ENCODE measurements at regions of chr10 and their contacts with region 1.

Region 1: GRCh38 chr10:28991326-28992270 is 297.3 kb upstream of the LYZL1 start:
- DNase-seq: peak; percentile 80
- ATAC-seq: peak; percentile 93
- H3K4me3 ChIP-seq: no peak overlapping the region
- H3K27ac ChIP-seq: peak overlapping the region; percentile 68
- H3K4me1 ChIP-seq: peaks cover 21% of the 10 kb centered on the region
- H3K27me3 ChIP-seq: no peaks in the 10 kb centered on the region
- CTCF ChIP-seq: peak; percentile 91

Region 2: GRCh38 chr10:29105531-29106215 is 114.1 kb after region 1 on chr10:
- CTCF ChIA-PET with region 1: no interaction called
- POLR2A ChIA-PET with region 1: no interaction called
- intact Hi-C with region 1: loop called (anchors 5 kb)
- DNase-seq: peak; percentile 84
- ATAC-seq: peak; percentile 71
- H3K4me3 ChIP-seq: peak overlapping the region; percentile 30; the same call in 1 of the 2 replicates
- H3K27ac ChIP-seq: peak overlapping the region; percentile 92
- H3K4me1 ChIP-seq: peaks cover 55% of the 10 kb centered on the region
- H3K27me3 ChIP-seq: no peaks in the 10 kb centered on the region
- CTCF ChIP-seq: no peak

Region 3: GRCh38 chr10:29131952-29132820 is 140.6 kb after region 1 on chr10:
- CTCF ChIA-PET with region 1: interaction called, 5 read pairs
- POLR2A ChIA-PET with region 1: no interaction called
- intact Hi-C with region 1: loop called (anchors 1 kb)
- DNase-seq: peak; percentile 56
- ATAC-seq: peak; percentile 85
- H3K4me3 ChIP-seq: no peak overlapping the region
- H3K27ac ChIP-seq: peak overlapping the region; percentile 46
- H3K4me1 ChIP-seq: peaks cover 12% of the 10 kb centered on the region
- H3K27me3 ChIP-seq: no peaks in the 10 kb centered on the region
- CTCF ChIP-seq: no peak

Region 4: GRCh38 chr10:29257106-29257783 is 265.6 kb after region 1 on chr10:
- CTCF ChIA-PET with region 1: no interaction called
- POLR2A ChIA-PET with region 1: no interaction called
- intact Hi-C with region 1: no loop called
- DNase-seq: peak; percentile 82
- ATAC-seq: peak; percentile 91
- H3K4me3 ChIP-seq: no peak overlapping the region
- H3K27ac ChIP-seq: peak overlapping the region; percentile 61
- H3K4me1 ChIP-seq: peaks cover 22% of the 10 kb centered on the region
- H3K27me3 ChIP-seq: 0 out of 2 replicates have a peak, but pooled peaks cover 8% of the 10 kb centered on the region
- CTCF ChIP-seq: no peak

Measured in PC-3 (cell line).